GM23248 (cell line): ENCODE measurements at regions of chr17 and their contacts with region 1.

Region 1: GRCh38 chr17:41739661-41740352 is 5.4 kb upstream of the HAP1 start:
- DNase-seq: peak; percentile 72
- H3K4me3 ChIP-seq: no peak overlapping the region
- H3K27ac ChIP-seq: no peak overlapping the region
- H3K4me1 ChIP-seq: peaks cover 6% of the 10 kb centered on the region; the same call in 1 of the 2 replicates
- H3K27me3 ChIP-seq: peaks cover 28% of the 10 kb centered on the region

Region 2: GRCh38 chr17:41796121-41796895 is 56.5 kb after region 1 on chr17:
- in situ Hi-C with region 1: loop called (anchors 5 kb)
- DNase-seq: no peak
- H3K4me3 ChIP-seq: no peak overlapping the region
- H3K27ac ChIP-seq: no peak overlapping the region
- H3K4me1 ChIP-seq: peaks cover 25% of the 10 kb centered on the region
- H3K27me3 ChIP-seq: no peaks in the 10 kb centered on the region

Region 3: GRCh38 chr17:41848788-41849187 is 109.0 kb after region 1 on chr17:
- in situ Hi-C with region 1: no loop called
- DNase-seq: no peak
- H3K4me3 ChIP-seq: no peak overlapping the region
- H3K27ac ChIP-seq: no peak overlapping the region
- H3K4me1 ChIP-seq: no peaks in the 10 kb centered on the region
- H3K27me3 ChIP-seq: no peaks in the 10 kb centered on the region